ENCODE measurements at regions of chrX and their contacts with region 1.

Region 1: DNA sequence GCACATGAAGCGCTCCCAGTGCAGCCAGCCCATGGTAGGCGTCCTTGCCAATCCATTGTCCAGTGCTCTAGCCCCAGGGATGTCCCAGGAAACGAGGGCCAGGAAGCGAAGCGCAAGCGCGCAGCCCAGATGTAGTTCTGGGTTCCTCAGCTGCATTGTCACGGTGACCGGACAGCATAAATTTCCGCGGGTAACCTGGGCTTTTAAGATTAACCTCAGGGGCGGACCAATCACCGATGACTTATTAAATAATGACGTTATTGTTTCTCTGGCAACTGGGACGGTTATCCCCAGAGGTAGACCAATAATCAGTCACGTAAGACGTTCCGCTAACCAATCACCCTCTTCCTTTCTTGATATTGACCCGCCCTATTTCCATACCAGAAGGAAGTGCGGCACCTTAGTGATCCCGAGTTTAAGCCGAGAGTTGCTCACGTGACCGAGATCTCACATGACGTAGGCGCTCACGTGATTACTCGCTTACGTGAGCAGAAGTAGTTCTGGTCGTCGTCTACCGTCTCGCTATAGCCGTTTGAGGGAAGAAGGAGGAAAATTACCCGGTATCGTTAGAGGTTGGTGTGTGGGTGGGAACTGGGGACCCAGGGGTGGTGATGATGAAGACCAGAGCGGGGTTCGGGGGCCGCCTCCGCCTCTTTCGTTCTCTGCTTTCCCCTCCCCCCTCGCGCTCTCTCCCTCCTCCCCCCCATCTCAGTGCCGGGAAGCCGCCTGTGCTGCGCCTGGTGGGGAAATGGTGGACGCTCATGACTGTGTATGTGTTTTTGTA is at the starts of genes GLA and HNRNPH2:
- DNase-seq: peak; percentile 94
- H3K4me3 Mint-ChIP-seq: peak within 1 kb of the TSS; percentile 89
- H3K27ac Mint-ChIP-seq: peak within 1 kb of the TSS; percentile 98
- H3K4me1 Mint-ChIP-seq: peaks cover 25% of the 10 kb centered on the region
- H3K27me3 Mint-ChIP-seq: peaks cover 2% of the 10 kb centered on the region
- total RNA-seq, gene GLA: 40.4 to 43.6 TPM
- total RNA-seq, gene HNRNPH2: 32.5 to 33.8 TPM

Region 2: GRCh38 chrX:101097546-101098453 is 310.1 kb before region 1 on chrX and contains the start of gene CENPI:
- CTCF ChIA-PET with region 1: no interaction called
- POLR2A ChIA-PET with region 1: no interaction called
- intact Hi-C with region 1: loop called (anchors 5 kb)
- DNase-seq: peak; percentile 95
- H3K4me3 Mint-ChIP-seq: peak within 1 kb of the TSS; percentile 84
- H3K27ac Mint-ChIP-seq: peak within 1 kb of the TSS; percentile 81
- H3K4me1 Mint-ChIP-seq: peaks cover 30% of the 10 kb centered on the region
- H3K27me3 Mint-ChIP-seq: no peaks in the 10 kb centered on the region
- total RNA-seq, gene CENPI: 21.1 to 22.3 TPM

Region 3: DNA sequence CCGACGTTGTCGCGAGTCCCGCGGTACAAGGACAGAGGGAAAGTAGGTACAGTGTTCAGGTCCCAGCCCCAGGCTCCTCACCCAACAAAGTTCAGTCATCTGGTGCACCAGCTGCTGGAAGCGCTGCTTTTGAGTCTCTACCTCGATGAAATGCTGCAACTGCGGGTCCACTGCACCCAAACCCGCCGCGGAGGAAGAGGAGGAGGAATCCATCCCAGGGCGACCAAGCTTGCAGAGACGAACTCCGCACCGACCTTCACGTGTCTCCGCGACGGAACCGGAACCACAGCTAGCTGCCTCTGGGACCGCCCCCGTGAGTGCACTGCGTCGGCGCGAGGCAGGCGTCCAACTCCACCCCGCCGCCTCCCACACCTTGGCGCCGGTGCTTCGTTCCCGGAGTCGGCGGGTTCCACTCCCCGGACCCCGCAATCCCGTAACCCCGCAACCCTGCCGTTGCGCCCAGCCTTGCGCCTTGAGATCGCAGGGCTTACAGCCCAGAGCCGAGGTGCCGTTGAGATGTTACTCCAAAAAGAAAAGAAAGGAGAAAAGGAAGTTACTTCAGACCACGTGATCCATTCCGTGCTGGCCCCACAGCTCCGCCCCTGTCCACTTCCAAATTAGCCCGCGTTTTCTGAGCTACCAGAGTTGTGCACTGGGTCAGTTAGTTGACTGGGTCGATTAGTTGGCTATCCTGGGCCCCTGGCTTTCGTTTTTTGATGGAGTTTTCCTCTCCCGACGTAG is 59.3 kb before region 1 on chrX and contains the start of gene TIMM8A:
- CTCF ChIA-PET with region 1: no interaction called
- POLR2A ChIA-PET with region 1: no interaction called
- intact Hi-C with region 1: loop called (anchors 1 kb)
- DNase-seq: peak; percentile 86
- H3K4me3 Mint-ChIP-seq: peak within 1 kb of the TSS; percentile 91
- H3K27ac Mint-ChIP-seq: peak within 1 kb of the TSS; percentile 92
- H3K4me1 Mint-ChIP-seq: peaks cover 12% of the 10 kb centered on the region
- H3K27me3 Mint-ChIP-seq: no peaks in the 10 kb centered on the region
- total RNA-seq, gene TIMM8A: 21.9 to 23.1 TPM

Region 4: DNA sequence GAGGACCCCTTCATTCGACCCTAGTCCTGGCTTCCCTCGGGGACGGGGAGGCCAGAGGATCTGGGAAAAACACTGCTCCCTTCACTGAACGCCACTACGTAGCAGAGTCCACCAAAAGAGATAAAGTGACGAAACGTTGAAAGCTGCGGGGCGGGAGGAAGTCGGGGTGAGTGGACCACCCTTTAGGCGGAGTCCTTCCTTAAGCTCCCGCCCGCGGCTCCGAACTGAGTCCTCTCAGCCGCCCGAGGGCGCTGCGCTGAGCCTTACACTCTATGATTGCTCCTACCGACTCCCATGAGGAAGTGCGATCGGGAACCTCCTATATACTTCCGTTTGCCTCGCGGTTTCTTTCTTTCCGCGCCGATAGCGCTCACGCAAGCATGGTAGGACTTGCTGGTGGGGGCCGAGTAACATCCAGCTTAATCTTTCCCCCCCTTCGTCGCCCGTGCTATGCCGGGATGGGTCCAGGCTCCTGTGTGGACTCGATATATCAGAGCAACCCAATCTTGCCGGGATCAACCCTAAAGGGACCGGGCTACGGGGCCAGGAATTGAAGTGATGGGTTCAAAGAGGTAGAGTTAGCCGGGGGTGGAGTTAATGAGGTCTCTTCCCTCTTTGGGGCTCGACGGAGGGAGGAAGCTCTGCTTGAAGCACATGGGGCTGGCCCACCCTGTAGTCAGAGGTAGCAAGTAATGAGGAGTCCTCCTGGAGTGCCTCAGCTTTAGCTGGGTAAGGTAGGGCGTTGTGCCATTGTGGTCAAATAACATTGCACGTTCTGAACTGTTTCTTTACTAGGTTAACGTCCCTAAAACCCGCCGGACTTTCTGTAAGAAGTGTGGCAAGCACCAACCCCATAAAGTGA is 17.0 kb before region 1 on chrX and contains the start of gene RPL36A:
- CTCF ChIA-PET with region 1: interaction called, 9 read pairs
- POLR2A ChIA-PET with region 1: interaction called, 7 read pairs
- intact Hi-C with region 1: loop called (anchors 1 kb)
- DNase-seq: peak; percentile 89
- H3K4me3 Mint-ChIP-seq: peak within 1 kb of the TSS; percentile 94
- H3K27ac Mint-ChIP-seq: peak within 1 kb of the TSS; percentile 96
- H3K4me1 Mint-ChIP-seq: peaks cover 15% of the 10 kb centered on the region
- H3K27me3 Mint-ChIP-seq: no peaks in the 10 kb centered on the region
- total RNA-seq, gene RPL36A: 364 to 420 TPM

Region 5: GRCh38 chrX:101530944-101531343 is 123.0 kb after region 1 on chrX:
- CTCF ChIA-PET with region 1: no interaction called
- POLR2A ChIA-PET with region 1: no interaction called
- intact Hi-C with region 1: no loop called
- DNase-seq: no peak
- H3K4me3 Mint-ChIP-seq: no peak overlapping the region
- H3K27ac Mint-ChIP-seq: no peak overlapping the region
- H3K4me1 Mint-ChIP-seq: no peaks in the 10 kb centered on the region
- H3K27me3 Mint-ChIP-seq: no peaks in the 10 kb centered on the region

Region 6: GRCh38 chrX:101931488-101932248 is 523.7 kb after region 1 on chrX and contains the start of gene ZMAT1:
- CTCF ChIA-PET with region 1: no interaction called
- POLR2A ChIA-PET with region 1: no interaction called
- intact Hi-C with region 1: loop called (anchors 1 kb)
- DNase-seq: peak; percentile 95
- H3K4me3 Mint-ChIP-seq: peak within 1 kb of the TSS; percentile 77
- H3K27ac Mint-ChIP-seq: peak within 1 kb of the TSS; percentile 87
- H3K4me1 Mint-ChIP-seq: peaks cover 11% of the 10 kb centered on the region
- H3K27me3 Mint-ChIP-seq: no peaks in the 10 kb centered on the region
- total RNA-seq, gene ZMAT1: 3.7 to 3.9 TPM

Measured in activated CD4-positive, alpha-beta memory T cell treated with anti-CD3 and anti-CD28 coated beads for 36 hours (primary cell).